Activated naive CD4-positive, alpha-beta T cell treated with anti-CD3 and anti-CD28 coated beads for 36 hours (primary cell): ENCODE measurements at regions of chr2 and their contacts with region 1.

Region 1: DNA sequence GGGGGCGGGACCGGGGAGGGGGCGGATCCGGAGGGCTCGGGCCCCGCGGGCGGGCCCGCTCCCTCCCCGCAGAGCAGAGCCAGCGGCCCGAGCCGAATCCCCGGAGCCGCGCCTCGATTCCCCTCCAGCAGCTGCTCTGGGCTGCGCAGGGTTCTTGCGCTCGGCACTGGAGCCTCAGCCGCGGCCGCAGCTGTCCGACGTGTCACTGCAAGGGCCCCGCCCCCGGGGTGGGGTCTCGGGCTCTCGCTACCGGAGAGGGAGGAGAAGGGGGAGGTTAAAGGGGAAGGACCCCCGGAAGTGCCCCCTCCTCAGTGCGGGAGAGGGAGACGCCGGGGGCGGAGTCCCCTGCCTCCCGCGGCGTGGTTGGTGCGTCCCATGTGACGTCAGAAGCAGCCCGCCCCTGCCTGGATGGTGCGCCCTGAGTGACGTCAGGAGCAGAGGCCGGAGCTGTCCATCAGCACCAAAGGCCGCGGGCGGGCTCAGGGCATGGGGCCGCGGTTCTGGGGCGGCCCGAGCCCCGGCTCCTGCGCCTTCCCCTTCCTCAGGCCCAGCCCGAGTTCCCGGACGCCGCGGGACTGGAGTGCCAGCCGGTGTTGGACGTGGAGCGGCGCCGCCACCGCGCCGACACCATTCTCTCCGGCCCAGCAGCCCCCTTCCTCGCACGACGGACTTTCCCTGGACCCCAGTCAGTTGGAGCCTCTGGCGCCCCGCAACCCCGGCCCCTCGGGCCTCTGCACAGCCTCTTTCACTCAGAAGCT is at the starts of genes CHPF and TMEM198:
- DNase-seq: peak; percentile 97
- H3K4me3 Mint-ChIP-seq: peak within 1 kb of the TSS; percentile 79
- H3K27ac Mint-ChIP-seq: no peak within 1 kb of the TSS
- H3K4me1 Mint-ChIP-seq: peaks cover 20% of the 10 kb centered on the region
- H3K27me3 Mint-ChIP-seq: peaks cover 8% of the 10 kb centered on the region
- total RNA-seq, gene CHPF: 8.5 to 9.0 TPM
- total RNA-seq, gene TMEM198: 0.86 to 1.1 TPM

Region 2: DNA sequence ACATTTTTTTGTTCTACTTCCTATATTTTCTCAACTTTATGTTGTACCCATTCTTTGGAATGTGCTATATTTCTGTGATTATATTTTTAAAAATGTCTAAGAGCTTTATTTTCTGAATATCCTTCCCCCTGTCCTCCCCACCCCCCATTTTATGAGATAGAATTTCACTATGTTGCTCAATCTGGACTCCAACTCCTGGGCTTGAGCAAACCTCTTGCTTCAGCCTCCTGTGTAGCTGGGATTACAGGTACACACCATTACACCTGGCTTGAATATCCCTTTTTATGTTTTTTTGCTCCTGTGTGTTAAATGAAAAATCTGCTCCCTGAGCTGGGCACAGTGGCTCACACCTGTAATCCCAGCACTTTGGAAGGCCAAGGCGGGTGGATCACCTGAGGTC is 346.4 kb before region 1 on chr2:
- CTCF ChIA-PET with region 1: no interaction called
- intact Hi-C with region 1: no loop called
- DNase-seq: no peak
- H3K4me3 Mint-ChIP-seq: no peak overlapping the region
- H3K27ac Mint-ChIP-seq: no peak overlapping the region
- H3K4me1 Mint-ChIP-seq: peaks cover 12% of the 10 kb centered on the region
- H3K27me3 Mint-ChIP-seq: no peaks in the 10 kb centered on the region

Region 3: DNA sequence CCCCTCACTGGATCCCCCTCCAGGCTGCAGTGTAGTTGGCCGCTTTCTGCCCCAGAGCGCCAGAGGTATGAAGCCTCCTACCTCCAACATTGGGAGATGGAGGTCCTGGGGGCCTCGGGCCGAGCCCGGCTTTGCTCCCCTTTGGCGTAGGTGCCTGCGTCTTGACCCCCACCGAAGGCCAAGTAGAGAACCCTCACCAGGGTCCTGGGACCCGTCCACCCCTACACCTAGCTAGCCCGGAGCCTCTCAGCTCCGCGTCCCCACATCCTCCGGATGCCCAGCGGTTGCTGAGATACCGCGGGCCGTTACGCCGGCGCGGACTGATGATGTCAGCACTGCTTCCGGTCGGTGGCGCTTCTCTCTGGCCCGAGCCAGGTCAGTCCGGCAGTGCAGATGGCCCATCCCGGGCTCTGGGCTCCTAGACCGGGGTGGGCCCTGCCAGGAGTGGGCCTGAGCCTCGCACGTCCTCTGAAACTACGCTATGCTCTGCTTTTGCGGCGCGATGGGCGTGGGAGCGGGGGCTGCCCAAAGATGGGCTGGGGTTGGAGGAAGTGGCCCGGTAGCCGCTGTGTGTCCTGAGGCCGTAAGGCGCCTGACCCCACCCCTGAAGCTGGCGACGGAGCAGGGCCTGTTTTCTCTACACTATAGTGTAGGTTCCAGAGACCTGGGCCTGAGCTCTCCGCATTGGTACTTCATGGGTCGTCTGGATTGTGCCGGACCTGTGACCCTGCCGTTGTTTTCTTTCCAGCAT is 298.5 kb before region 1 on chr2 and contains the starts of genes GLB1L and STK16:
- CTCF ChIA-PET with region 1: no interaction called
- intact Hi-C with region 1: loop called (anchors 5 kb)
- DNase-seq: peak; percentile 92
- H3K4me3 Mint-ChIP-seq: peak within 1 kb of the TSS; percentile 98
- H3K27ac Mint-ChIP-seq: peak within 1 kb of the TSS; percentile 99
- H3K4me1 Mint-ChIP-seq: peaks cover 57% of the 10 kb centered on the region
- H3K27me3 Mint-ChIP-seq: no peaks in the 10 kb centered on the region
- total RNA-seq, gene GLB1L: 2.1 TPM
- total RNA-seq, gene STK16: 33.7 to 35.5 TPM

Region 4: DNA sequence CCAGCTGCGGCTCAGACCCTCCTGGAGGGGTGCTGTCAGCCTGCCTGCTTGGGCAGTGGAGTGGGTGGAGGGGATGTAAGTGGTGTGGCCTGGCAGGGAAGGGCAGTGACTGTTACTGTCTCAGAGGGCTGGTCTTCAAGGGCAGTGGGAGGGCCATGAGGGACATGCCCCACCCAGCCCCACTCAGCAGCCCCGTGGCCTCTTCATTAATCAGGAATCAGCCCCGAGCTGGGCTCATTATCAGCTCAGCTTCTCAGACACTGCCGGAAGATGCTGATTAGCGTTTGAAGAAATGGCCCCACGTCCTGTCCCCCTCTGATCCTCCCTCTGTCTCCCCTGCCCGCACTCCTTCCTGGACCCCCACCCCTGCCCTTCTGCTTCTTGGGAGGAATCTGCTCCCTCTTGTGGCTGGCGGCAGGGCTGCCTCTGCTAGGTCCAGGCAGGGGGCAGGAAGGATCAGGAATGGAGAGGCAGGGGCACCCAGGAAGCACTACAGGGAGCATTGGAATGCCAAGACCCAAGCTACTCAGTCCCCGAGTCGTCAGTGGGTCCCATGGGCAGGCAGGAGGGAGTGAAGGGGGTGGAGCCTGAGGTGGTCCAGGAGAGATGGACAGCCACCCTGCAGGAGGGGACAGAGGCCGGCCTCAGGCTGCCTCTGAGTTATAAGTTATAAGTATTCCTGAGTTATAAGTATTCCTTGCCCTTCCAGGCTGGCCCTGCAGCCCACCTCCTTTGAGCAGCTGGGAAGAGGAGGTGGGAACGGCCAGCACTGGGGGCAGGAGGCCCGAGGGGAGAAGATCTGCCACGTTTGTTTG is 22.5 kb before region 1 on chr2:
- CTCF ChIA-PET with region 1: interaction called, 65 read pairs
- intact Hi-C with region 1: no loop called
- DNase-seq: peak; percentile 34
- H3K4me3 Mint-ChIP-seq: no peak overlapping the region
- H3K27ac Mint-ChIP-seq: no peak overlapping the region
- H3K4me1 Mint-ChIP-seq: peaks cover 14% of the 10 kb centered on the region
- H3K27me3 Mint-ChIP-seq: peaks cover 64% of the 10 kb centered on the region

Region 5: DNA sequence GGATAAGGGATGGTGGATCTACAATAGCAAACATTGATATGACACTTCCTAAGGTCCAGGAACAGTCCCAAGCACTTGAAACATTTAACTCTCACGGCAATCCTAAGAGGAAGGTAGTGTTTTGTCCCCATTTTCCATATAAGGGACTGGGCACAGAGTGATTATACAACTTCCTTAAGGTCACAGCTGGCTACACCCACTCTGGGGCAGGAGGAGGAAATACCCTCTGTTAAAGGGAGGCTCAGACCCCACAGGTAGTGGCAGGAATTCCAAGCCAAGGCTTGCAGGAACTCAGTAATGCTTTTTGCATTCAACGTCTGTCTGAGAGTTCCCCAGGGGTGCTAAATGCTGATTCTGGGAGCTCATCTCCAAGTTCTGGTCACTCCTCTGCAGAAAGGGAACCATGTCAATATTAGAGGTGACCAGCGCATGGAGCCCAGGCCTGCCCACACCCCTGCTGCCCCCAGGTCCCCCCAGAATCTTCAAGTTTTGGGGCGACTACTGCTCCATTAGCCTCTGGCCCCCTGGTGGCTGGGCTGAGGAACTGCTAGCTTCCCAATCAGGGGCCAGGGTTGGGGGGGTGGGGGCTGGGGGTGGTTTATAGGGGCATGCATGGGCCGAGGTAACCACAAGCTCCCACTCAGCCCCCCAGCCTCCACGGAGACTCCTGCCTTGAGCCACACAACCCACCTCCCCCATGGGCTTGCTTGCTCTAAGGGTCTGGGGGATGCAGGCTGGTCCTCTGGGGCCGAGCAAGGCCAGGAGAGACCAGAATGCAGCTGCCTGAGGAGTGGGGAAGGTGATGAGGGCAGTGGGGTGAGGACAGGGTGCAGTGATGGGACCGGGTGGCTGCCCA is 16.5 kb after region 1 on chr2:
- CTCF ChIA-PET with region 1: interaction called, 56 read pairs
- intact Hi-C with region 1: loop called (anchors 1 kb)
- DNase-seq: no peak
- H3K4me3 Mint-ChIP-seq: no peak overlapping the region
- H3K27ac Mint-ChIP-seq: no peak overlapping the region
- H3K4me1 Mint-ChIP-seq: no peaks in the 10 kb centered on the region
- H3K27me3 Mint-ChIP-seq: peaks cover 9% of the 10 kb centered on the region

Region 6: DNA sequence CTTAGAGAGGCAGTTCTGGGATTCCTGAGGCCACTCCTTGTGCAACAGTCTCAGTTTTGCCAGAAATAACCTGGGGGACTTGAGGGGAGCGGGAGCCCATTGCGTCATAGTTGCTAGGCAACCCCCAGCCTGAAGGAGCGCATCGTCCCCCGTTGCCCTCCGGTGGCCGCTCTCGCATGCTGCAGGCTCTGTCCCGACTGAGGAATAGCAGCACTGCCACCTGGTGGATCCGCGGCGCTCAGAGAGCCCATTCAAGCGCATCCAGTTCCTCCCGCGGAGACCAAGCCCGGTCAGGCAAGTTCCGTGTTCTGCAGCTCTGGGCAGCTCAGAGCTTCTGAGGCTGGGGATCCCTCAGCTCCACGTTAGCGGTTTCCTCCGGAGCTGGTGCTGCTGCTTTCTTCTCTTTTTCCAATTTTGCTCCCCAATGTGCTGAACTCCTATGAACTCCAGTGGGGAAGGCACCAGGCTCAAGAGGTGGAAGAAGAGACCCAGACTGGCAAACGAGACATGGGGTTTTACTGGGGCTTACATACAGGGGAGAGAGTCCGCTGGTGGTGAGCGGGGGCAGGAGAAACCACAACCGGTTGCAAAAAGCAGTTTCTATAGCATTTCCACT is 98.8 kb after region 1 on chr2:
- CTCF ChIA-PET with region 1: interaction called, 55 read pairs
- intact Hi-C with region 1: loop called (anchors 1 kb)
- DNase-seq: peak; percentile 95
- H3K4me3 Mint-ChIP-seq: no peak overlapping the region
- H3K27ac Mint-ChIP-seq: no peak overlapping the region
- H3K4me1 Mint-ChIP-seq: peaks cover 5% of the 10 kb centered on the region
- H3K27me3 Mint-ChIP-seq: peaks cover 6% of the 10 kb centered on the region

Region 7: DNA sequence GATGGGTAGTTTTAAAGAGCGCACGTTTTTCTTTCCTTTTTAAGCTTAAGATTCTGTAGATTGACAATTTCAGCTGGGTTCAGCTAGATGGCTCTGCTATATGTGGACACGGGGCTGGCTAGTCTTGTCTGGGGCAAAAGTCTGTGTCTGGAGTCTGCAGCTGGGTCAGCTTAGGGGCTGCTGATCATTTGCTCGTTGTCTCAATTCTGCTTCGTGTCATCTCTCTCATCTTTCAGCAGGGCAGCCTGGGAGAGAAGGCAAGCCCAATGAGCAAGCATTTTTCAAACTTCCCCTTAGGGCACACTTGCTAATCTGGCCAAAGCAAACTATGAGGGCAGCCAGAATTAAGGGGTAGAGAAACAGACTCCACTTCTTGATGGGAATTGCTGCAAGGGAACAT is 546.2 kb after region 1 on chr2:
- CTCF ChIA-PET with region 1: no interaction called
- intact Hi-C with region 1: no loop called
- DNase-seq: no peak
- H3K4me3 Mint-ChIP-seq: no peak overlapping the region
- H3K27ac Mint-ChIP-seq: no peak overlapping the region
- H3K4me1 Mint-ChIP-seq: no peaks in the 10 kb centered on the region
- H3K27me3 Mint-ChIP-seq: peaks cover 2% of the 10 kb centered on the region